ENCODE measurements at regions of chr3 and their contacts with region 1.

Region 1: GRCh38 chr3:23202921-23203707 is at the start of gene UBE2E2:
- DNase-seq: peak; percentile 66
- H3K4me3 ChIP-seq: peak within 1 kb of the TSS; percentile 94 to 97 (median 95)
- H3K27ac ChIP-seq: peak within 1 kb of the TSS; percentile 58
- H3K4me1 ChIP-seq: peaks cover 5% of the 10 kb centered on the region
- H3K27me3 ChIP-seq: peaks cover 6 to 8% of the 10 kb centered on the region in 2 experiments
- CTCF ChIP-seq: no peak
- POLR2A ChIP-seq: no peak
- total RNA-seq, gene UBE2E2: 32.8 and 45.4 TPM in 2 replicates

Region 2: GRCh38 chr3:23071296-23071695 is 131.8 kb before region 1 on chr3:
- CTCF ChIA-PET with region 1: no interaction called
- POLR2A ChIA-PET with region 1: no interaction called
- dilution Hi-C with region 1: no loop called
- intact Hi-C with region 1: no loop called
- DNase-seq: no peak
- H3K4me3 ChIP-seq: no peak overlapping the region
- H3K27ac ChIP-seq: no peak overlapping the region
- H3K4me1 ChIP-seq: no peaks in the 10 kb centered on the region
- H3K27me3 ChIP-seq: no peaks in the 10 kb centered on the region
- CTCF ChIP-seq: no peak
- POLR2A ChIP-seq: no peak

Region 3: DNA sequence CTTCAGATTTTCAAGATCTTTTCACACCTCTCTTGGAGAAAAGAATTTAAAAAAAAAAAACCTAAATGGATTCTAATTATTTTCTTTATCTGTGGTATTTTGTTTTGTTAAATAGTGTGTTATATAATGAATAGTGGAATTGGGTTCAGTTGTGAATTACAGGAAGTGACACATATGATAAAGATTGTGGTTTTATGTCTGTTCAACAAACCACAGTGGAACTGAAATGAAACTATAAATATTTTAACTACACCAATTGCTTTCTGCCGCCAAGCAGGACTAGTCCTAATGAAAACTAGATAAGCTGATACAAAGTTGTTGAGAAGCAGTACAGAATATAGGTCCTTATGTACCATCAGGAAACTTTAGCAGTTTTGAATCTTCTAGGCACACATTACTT is 121.6 kb after region 1 on chr3:
- CTCF ChIA-PET with region 1: no interaction called
- POLR2A ChIA-PET with region 1: no interaction called
- dilution Hi-C with region 1: no loop called
- intact Hi-C with region 1: loop called (anchors 5 kb)
- DNase-seq: peak; percentile 77
- H3K4me3 ChIP-seq: peak overlapping the region in 2 of 3 experiments; percentile 20 to 66
- H3K27ac ChIP-seq: peak overlapping the region; percentile 82
- H3K4me1 ChIP-seq: peaks cover 23% of the 10 kb centered on the region
- H3K27me3 ChIP-seq: no peaks in the 10 kb centered on the region
- CTCF ChIP-seq: no peak
- POLR2A ChIP-seq: no peak

Region 4: DNA sequence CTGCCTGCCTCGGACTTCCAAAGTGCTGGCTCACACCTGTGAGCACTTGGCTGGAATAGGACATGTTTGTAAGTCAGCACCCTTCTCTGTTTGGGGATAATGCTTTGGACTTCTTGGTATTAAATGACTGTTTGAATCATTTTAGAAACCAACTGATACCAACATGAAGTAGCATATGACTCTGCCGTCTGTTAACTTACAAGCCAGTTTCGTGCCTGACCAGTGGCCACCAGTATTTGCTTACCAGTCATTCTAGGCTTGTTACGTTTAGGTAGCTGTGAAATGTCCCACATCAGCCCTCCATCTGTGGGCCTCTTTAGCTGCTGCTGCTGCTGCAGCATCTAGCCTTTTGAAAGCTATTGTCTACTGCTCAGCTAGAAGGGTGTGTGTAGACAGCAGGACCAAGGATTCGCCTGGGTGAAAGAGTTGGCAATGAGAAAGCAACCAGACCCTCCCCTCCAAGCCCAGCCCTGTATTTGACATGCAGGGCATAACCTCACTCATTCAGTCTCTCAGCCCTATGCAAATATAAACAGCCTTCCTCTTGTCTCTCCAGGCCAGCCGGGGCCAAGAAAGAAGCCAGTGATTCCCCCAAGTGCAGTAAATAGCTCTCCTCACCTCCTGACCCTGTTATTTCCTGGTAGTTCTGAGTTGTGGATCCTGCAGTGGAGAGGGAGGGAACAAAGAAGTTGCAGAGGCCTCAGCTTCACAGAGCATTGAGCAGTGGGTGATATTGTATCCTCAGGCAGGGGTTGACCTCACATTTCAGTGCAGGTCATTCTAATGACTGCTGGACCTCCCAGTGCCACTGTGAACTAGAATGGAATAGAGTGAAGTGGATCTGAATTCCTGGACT is 662.7 kb after region 1 on chr3:
- CTCF ChIA-PET with region 1: no interaction called
- POLR2A ChIA-PET with region 1: no interaction called
- dilution Hi-C with region 1: no loop called
- intact Hi-C with region 1: loop called (anchors 1 kb)
- DNase-seq: peak; percentile 87
- H3K4me3 ChIP-seq: no peak overlapping the region
- H3K27ac ChIP-seq: peak overlapping the region; percentile 4
- H3K4me1 ChIP-seq: peaks cover 48% of the 10 kb centered on the region
- H3K27me3 ChIP-seq: no peaks in the 10 kb centered on the region
- CTCF ChIP-seq: no peak
- POLR2A ChIP-seq: no peak

Measured in endothelial cell of umbilical vein (primary cell).